ENCODE measurements at regions of chr2 and their contacts with region 1.

Region 1: DNA sequence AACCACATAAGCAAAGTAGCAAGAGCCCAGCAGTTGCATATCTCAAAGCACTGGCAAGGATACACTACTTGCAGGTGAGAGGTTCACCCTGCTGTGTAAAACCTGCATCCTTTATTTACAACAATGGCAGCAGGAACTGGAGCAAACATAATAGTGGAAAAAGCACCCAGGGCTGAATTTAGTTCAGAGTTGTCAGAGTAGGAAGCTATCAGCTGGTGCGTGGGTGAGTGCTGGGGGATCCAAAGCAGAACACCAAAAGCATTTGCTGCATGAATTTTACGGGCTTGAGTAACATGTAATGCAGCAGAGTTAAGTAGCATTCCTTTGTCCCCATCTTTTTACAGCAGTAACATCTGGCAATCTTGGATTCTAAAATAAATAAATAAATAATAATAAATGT is 73.5 kb upstream of the SRD5A2 start:
- DNase-seq: no peak
- H3K4me3 ChIP-seq: no peak overlapping the region
- H3K27ac ChIP-seq: no peak overlapping the region
- H3K4me1 ChIP-seq: no peaks in the 10 kb centered on the region
- H3K27me3 ChIP-seq: no peaks in the 10 kb centered on the region
- CTCF ChIP-seq: no peak
- POLR2A ChIP-seq: no peak

Region 2: DNA sequence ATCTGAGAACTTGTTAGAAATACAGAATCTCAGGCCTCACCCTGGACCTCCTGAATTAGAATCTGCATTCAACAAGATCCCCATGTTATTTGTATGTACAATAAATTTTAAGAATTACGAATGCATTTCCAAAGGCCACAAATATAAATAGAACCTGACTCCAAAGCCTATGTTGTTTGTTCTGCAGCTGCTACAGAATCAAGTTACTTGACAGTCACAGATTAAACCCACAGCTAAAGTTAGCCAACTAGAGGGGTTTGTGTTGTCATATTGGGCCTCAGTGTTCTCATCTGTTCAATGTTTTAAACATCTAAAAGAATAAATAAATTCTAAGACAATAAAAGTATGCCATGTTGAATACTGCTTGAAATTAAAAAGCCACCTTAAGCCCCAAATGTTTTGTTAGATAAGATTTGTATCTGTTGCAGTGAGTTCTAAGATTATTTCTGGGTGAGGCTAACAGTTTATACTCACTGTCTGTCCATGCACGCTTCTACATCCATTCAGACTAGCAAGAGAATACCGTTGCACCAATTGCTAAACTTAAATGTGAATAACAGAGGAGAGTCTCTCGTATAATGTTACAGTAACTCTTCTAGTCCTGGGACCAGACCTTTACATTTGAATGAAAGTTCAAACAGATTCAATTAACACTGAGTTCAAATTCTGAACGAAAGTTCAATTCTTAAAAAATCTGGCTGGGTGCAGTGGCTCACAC is 156.1 kb after region 1 on chr2:
- intact Hi-C with region 1: no loop called
- DNase-seq: no peak
- H3K4me3 ChIP-seq: no peak overlapping the region
- H3K27ac ChIP-seq: no peak overlapping the region
- H3K4me1 ChIP-seq: no peaks in the 10 kb centered on the region
- H3K27me3 ChIP-seq: no peaks in the 10 kb centered on the region
- CTCF ChIP-seq: no peak
- POLR2A ChIP-seq: no peak

Region 3: GRCh38 chr2:33366473-33366872 is 1712.2 kb after region 1 on chr2:
- intact Hi-C with region 1: loop called (anchors 10 kb)
- DNase-seq: peak in 1 of 2 donors; percentile 63
- H3K4me3 ChIP-seq: no peak overlapping the region
- H3K27ac ChIP-seq: no peak overlapping the region
- H3K4me1 ChIP-seq: no peaks in the 10 kb centered on the region
- H3K27me3 ChIP-seq: no peaks in the 10 kb centered on the region
- CTCF ChIP-seq: no peak
- POLR2A ChIP-seq: no peak

Measured in breast epithelium (tissue), 4 donors.